GM12878 (cell line): ENCODE measurements at regions of chr5 and their contacts with region 1.

Region 1: GRCh38 chr5:164672931-164673694 is 1167.7 kb downstream of the MAT2B start:
- DNase-seq: no peak
- ATAC-seq: peak; percentile 68
- H3K4me3 ChIP-seq: no peak overlapping the region
- H3K27ac ChIP-seq: no peak overlapping the region
- H3K4me1 ChIP-seq: no peaks in the 10 kb centered on the region
- H3K27me3 ChIP-seq: no peaks in the 10 kb centered on the region
- CTCF ChIP-seq: peak in 1 of 3 experiments; percentile 32; a peak in 1 of 6 replicates
- EP300 ChIP-seq: no peak
- POLR2A ChIP-seq: no peak
- RAD21 ChIP-seq: peak; percentile 31; the same call in 1 of the 2 replicates

Region 2: DNA sequence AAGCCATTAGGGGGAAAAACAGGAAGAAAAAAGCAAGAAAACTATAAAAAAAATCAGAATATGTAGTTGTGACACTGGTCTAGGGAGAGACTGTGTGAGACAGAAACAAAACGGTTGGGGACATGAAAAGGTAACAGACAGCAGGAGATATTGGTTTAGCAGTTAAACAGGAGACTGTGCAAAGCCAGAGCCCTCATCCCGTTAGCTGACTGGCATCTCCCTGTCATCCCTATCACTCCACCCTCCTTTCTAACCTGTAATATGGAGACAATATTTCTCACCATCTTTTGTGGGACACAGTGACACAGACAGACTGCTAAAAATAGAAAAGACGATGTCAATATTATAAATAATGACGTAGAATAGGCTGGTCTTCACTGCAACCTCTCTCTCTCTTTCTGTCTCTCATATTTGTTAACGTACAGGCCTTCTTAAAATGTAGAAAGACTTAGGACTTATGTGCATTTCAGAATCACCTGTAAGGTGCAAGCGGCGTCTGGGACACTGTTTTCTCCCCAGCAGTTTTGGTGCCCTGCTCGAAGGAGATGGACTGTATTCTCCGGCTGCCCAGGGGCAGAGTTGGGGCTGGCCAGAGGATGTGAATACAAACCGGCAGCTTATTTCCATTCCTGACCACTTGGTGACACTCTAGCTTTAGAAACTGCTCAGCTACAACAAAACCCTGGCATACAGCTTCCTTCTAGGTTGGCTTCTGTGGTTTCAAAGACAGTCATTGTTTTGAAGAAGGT is 977.1 kb before region 1 on chr5:
- CTCF ChIA-PET with region 1: no interaction called
- POLR2A ChIA-PET with region 1: no interaction called
- RAD21 ChIA-PET with region 1: no interaction called
- SMC1A ChIA-PET with region 1: no interaction called
- in situ Hi-C with region 1: no loop called
- intact Hi-C with region 1: loop called (anchors 2 kb)
- DNase-seq: peak; percentile 8
- ATAC-seq: peak; percentile 99
- H3K4me3 ChIP-seq: no peak overlapping the region
- H3K27ac ChIP-seq: no peak overlapping the region
- H3K4me1 ChIP-seq: no peaks in the 10 kb centered on the region
- H3K27me3 ChIP-seq: no peaks in the 10 kb centered on the region
- CTCF ChIP-seq: peak; percentile 55 to 77 (median 58); a peak in 5 of 6 replicates
- EP300 ChIP-seq: no peak
- POLR2A ChIP-seq: no peak
- RAD21 ChIP-seq: peak; percentile 86

Region 3: GRCh38 chr5:164540174-164540573 is 132.9 kb before region 1 on chr5:
- CTCF ChIA-PET with region 1: no interaction called
- POLR2A ChIA-PET with region 1: no interaction called
- RAD21 ChIA-PET with region 1: no interaction called
- SMC1A ChIA-PET with region 1: no interaction called
- in situ Hi-C with region 1: no loop called
- intact Hi-C with region 1: no loop called
- DNase-seq: no peak
- ATAC-seq: no peak
- H3K4me3 ChIP-seq: no peak overlapping the region
- H3K27ac ChIP-seq: no peak overlapping the region
- H3K4me1 ChIP-seq: no peaks in the 10 kb centered on the region
- H3K27me3 ChIP-seq: no peaks in the 10 kb centered on the region
- CTCF ChIP-seq: no peak
- EP300 ChIP-seq: no peak
- POLR2A ChIP-seq: no peak
- RAD21 ChIP-seq: no peak

Region 4: DNA sequence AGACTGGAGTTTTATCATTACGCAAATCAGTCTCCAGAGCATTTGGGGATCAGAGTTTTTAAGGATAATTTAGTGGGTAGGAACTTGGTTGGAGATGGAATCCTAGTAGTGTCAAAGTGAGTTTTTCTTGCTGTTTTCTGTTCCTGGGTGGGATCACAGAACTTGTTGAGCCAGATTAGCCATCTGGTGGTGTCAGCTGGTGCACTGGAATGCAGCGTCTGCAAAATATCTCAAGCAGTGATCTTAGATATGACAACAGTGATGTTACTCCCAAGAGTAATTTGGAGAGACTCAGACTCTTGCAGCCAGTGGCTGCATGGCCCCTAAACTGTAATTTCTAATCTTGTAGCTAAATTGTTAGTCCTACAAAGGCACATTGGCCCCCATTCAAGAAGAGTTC is 90.1 kb after region 1 on chr5:
- CTCF ChIA-PET with region 1: no interaction called
- POLR2A ChIA-PET with region 1: no interaction called
- RAD21 ChIA-PET with region 1: no interaction called
- SMC1A ChIA-PET with region 1: no interaction called
- in situ Hi-C with region 1: no loop called
- intact Hi-C with region 1: no loop called
- DNase-seq: no peak
- ATAC-seq: no peak
- H3K4me3 ChIP-seq: no peak overlapping the region
- H3K27ac ChIP-seq: no peak overlapping the region
- H3K4me1 ChIP-seq: no peaks in the 10 kb centered on the region
- H3K27me3 ChIP-seq: no peaks in the 10 kb centered on the region
- CTCF ChIP-seq: no peak
- EP300 ChIP-seq: no peak
- POLR2A ChIP-seq: no peak
- RAD21 ChIP-seq: no peak